Panc1 (cell line): ENCODE measurements at regions of chr1 and their contacts with region 1.

Region 1: GRCh38 chr1:248622570-248623001 is 12.3 kb downstream of the OR2T11 start:
- DNase-seq: peak; percentile 10
- ATAC-seq: peak; percentile 83
- H3K4me3 ChIP-seq: no peak overlapping the region
- H3K27ac ChIP-seq: no peak overlapping the region
- H3K4me1 ChIP-seq: no peaks in the 10 kb centered on the region
- H3K27me3 ChIP-seq: no peaks in the 10 kb centered on the region
- CTCF ChIP-seq: peak; percentile 67

Region 2: GRCh38 chr1:247681288-247681897 is 941.2 kb before region 1 on chr1:
- CTCF ChIA-PET with region 1: no interaction called
- POLR2A ChIA-PET with region 1: no interaction called
- in situ Hi-C with region 1: no loop called
- intact Hi-C with region 1: loop called (anchors 10 kb)
- DNase-seq: peak; percentile 46
- ATAC-seq: peak; percentile 78; the same call in 1 of the 2 replicates
- H3K4me3 ChIP-seq: no peak overlapping the region
- H3K27ac ChIP-seq: no peak overlapping the region
- H3K4me1 ChIP-seq: no peaks in the 10 kb centered on the region
- H3K27me3 ChIP-seq: no peaks in the 10 kb centered on the region
- CTCF ChIP-seq: peak; percentile 85

Region 3: DNA sequence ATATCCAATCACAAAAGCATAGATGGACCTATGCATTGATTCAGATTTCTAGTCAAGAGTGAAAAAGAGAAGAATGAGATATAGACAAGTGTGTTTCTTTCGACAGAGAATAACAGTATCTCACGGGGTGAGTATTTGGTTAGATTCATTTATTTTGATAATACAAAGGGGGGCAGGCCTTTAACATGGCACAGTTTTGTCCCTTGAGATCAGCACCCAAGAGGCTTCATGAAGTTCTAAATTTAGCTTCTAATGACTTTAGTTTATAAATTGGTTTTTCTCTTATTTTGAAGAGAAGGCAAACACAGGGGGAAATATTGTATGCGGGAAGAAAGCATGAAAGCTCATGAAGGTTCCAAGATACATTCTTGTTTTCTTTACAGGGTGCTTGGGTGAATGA is 862.1 kb before region 1 on chr1 and contains the start of gene OR1C1:
- CTCF ChIA-PET with region 1: no interaction called
- POLR2A ChIA-PET with region 1: no interaction called
- in situ Hi-C with region 1: no loop called
- intact Hi-C with region 1: no loop called
- DNase-seq: no peak
- ATAC-seq: no peak
- H3K4me3 ChIP-seq: no peak within 1 kb of the TSS
- H3K27ac ChIP-seq: no peak within 1 kb of the TSS
- H3K4me1 ChIP-seq: no peaks in the 10 kb centered on the region
- H3K27me3 ChIP-seq: no peaks in the 10 kb centered on the region
- CTCF ChIP-seq: no peak
- total RNA-seq, gene OR1C1: not detected

Region 4: DNA sequence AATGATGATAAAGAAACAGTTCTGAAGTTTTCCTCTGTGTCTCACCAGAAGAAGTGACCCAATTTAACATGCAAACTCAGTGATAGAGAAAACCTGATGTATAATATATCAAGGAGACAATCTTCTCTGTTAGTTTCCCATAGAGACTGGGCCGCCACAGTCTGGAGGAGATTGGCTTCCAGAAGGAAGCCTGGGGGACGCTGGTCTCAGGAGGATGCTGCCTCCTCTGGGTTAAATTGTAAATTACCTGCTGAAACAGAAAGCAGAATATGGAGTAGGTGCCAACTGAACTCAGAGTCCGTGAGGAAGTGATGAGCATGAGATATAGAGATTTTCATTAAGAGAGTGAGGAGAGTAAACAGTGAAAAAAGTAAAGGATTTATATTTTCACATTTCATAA is 64.2 kb after region 1 on chr1:
- CTCF ChIA-PET with region 1: no interaction called
- POLR2A ChIA-PET with region 1: no interaction called
- in situ Hi-C with region 1: no loop called
- intact Hi-C with region 1: loop called (anchors 5 kb)
- DNase-seq: no peak
- ATAC-seq: peak; percentile 69
- H3K4me3 ChIP-seq: no peak overlapping the region
- H3K27ac ChIP-seq: no peak overlapping the region
- H3K4me1 ChIP-seq: no peaks in the 10 kb centered on the region
- H3K27me3 ChIP-seq: no peaks in the 10 kb centered on the region
- CTCF ChIP-seq: peak; percentile 60

Region 5: GRCh38 chr1:248730507-248731335 is 108.1 kb after region 1 on chr1:
- CTCF ChIA-PET with region 1: no interaction called
- POLR2A ChIA-PET with region 1: no interaction called
- in situ Hi-C with region 1: no loop called
- intact Hi-C with region 1: no loop called
- DNase-seq: no peak
- ATAC-seq: no peak
- H3K4me3 ChIP-seq: peak overlapping the region in 1 of 2 experiments; percentile 15; a peak in 1 of 4 replicates
- H3K27ac ChIP-seq: no peak overlapping the region
- H3K4me1 ChIP-seq: no peaks in the 10 kb centered on the region
- H3K27me3 ChIP-seq: no peaks in the 10 kb centered on the region
- CTCF ChIP-seq: no peak

Region 6: DNA sequence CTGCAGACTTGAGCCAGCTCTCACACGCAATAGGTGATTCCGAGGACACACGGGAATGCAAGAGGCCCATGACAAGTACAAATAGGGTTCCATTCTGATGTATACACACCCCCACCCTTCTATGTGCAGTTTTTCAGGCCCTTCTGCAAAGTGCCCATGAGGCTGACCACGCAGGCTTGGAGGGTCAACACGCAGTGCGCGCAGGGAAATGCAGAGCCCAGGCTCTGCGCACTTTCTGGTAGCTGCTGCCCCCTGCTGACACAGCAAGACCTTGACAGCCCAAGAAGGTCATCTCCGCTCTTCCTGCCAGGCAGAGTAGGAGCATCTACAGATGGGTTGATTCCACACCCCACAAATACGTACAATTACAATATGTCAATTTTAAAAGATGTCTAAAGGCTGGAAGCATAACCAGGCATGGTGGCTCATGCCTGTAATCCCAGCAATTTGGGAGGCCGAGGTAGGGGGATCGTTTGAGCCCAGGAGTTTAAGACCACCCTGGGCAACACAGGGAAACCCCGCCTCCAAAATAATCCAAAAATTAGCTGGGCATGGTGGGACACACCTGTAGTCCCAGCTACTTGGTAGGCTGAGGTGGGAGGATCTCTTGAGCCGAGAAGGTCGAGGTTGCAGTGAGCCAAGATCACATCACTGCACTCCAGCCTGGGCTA is 184.6 kb after region 1 on chr1:
- CTCF ChIA-PET with region 1: no interaction called
- POLR2A ChIA-PET with region 1: no interaction called
- in situ Hi-C with region 1: no loop called
- intact Hi-C with region 1: loop called (anchors 1 kb)
- DNase-seq: peak; percentile 42
- ATAC-seq: peak; percentile 94
- H3K4me3 ChIP-seq: no peak overlapping the region
- H3K27ac ChIP-seq: no peak overlapping the region
- H3K4me1 ChIP-seq: no peaks in the 10 kb centered on the region
- H3K27me3 ChIP-seq: no peaks in the 10 kb centered on the region
- CTCF ChIP-seq: peak; percentile 90

Region 7: DNA sequence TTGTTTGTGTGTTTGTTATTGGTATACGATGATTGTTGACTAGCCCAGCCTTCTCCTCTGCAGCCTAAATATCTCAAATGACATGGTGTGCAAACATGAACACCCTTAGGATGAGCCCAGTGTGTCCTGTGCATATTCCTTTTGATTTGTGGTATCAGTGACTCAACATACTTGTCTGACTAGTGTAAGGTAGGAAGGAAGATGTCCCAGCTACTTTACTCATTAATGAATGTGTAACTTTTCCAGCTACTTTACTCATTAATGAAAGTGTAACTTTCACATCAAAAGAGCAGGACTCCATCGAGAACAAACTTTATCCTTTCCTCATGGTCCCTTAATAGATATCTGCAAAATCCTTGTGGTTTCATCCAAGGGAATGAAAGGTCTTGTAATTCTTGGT is 239.0 kb after region 1 on chr1:
- CTCF ChIA-PET with region 1: no interaction called
- POLR2A ChIA-PET with region 1: interaction called, 14 read pairs
- in situ Hi-C with region 1: no loop called
- intact Hi-C with region 1: no loop called
- DNase-seq: no peak
- ATAC-seq: no peak
- H3K4me3 ChIP-seq: no peak overlapping the region
- H3K27ac ChIP-seq: no peak overlapping the region
- H3K4me1 ChIP-seq: peaks cover 21% of the 10 kb centered on the region
- H3K27me3 ChIP-seq: peaks cover 3% of the 10 kb centered on the region; the same call in 1 of the 2 replicates
- CTCF ChIP-seq: no peak